SK-N-SH (cell line): ENCODE measurements at regions of chr20 and their contacts with region 1.

Region 1: GRCh38 chr20:36439040-36439730 is 102.1 kb upstream of the MYL9 start:
- DNase-seq: peak; percentile 86
- H3K4me3 ChIP-seq: no peak overlapping the region; a peak in 1 of 4 replicates
- H3K27ac ChIP-seq: no peak overlapping the region
- H3K4me1 ChIP-seq: peaks cover 0 to 4% of the 10 kb centered on the region in 2 experiments; a peak in 1 of 4 replicates
- H3K27me3 ChIP-seq: no peaks in the 10 kb centered on the region
- CTCF ChIP-seq: peak; percentile 92
- EP300 ChIP-seq: no peak
- RAD21 ChIP-seq: peak; percentile 94

Region 2: DNA sequence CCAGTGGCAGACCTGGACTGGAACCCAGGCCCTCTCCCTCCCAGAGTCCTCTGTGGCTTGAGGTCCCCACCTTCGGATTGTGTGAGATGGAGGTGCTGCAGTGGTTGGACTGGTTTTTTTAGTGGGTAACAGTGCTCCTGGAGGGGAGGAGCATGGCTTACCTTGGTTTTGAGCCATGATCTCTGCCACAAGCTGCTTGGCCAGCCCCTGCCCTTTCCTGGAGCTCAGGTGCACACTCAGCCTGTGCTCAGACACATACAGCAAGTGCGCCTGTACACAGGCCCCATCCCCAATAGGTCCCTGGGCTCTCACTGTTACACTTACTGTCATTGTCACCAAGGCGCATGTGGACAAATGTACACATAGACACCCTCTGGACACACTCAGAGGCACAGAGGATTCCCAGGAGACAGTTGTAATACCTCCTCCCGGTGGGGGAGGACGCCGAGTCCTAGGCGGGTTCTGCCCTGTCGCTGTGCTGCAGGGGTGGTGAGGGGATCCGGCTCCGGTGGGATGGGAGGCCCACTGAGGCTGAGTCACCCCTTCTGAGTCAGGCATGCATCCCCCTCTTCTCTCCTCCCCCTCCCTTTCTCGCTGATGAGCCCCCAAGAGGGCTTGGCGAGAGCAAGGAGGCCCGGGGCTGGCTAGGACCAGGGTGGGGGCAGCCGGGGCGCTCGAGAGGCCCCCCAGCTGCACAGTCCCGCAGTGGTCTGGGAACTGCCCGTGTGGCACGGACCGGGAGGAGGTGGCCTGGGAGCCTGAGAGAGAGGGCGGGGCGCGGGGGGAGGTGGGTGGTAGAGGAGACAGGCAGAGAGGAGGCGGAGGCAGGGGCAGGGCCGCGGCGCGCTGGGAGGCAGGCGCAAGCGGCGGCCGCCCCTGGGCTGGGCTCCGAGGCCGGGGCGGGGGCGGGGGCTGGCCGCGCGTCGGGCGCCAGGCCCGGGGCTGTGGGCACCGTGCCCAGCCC is 285.2 kb before region 1 on chr20:
- CTCF ChIA-PET with region 1: interaction called, 27 read pairs
- POLR2A ChIA-PET with region 1: no interaction called
- DNase-seq: peak; percentile 98
- H3K4me3 ChIP-seq: peak overlapping the region; percentile 88 to 89
- H3K27ac ChIP-seq: peak overlapping the region; percentile 8 to 50; a peak in 2 of 4 replicates
- H3K4me1 ChIP-seq: peaks cover 0 to 31% of the 10 kb centered on the region in 2 experiments; a peak in 2 of 4 replicates
- H3K27me3 ChIP-seq: no peaks in the 10 kb centered on the region
- CTCF ChIP-seq: no peak
- EP300 ChIP-seq: no peak
- RAD21 ChIP-seq: no peak

Region 3: GRCh38 chr20:36199345-36200257 is 239.6 kb before region 1 on chr20:
- CTCF ChIA-PET with region 1: interaction called, 219 read pairs
- POLR2A ChIA-PET with region 1: no interaction called
- DNase-seq: peak; percentile 86
- H3K4me3 ChIP-seq: peak overlapping the region in 1 of 2 experiments; percentile 46; a peak in 1 of 4 replicates
- H3K27ac ChIP-seq: peak overlapping the region in 1 of 2 experiments; percentile 94; a peak in 2 of 4 replicates
- H3K4me1 ChIP-seq: peaks cover 0 to 19% of the 10 kb centered on the region in 2 experiments; a peak in 2 of 4 replicates
- H3K27me3 ChIP-seq: no peaks in the 10 kb centered on the region
- CTCF ChIP-seq: peak; percentile 83
- EP300 ChIP-seq: peak in 1 of 2 experiments; percentile 50; a peak in 1 of 4 replicates
- RAD21 ChIP-seq: peak; percentile 90

Region 4: GRCh38 chr20:36228770-36229169 is 210.4 kb before region 1 on chr20:
- CTCF ChIA-PET with region 1: interaction called, 15 read pairs
- POLR2A ChIA-PET with region 1: no interaction called
- DNase-seq: no peak
- H3K4me3 ChIP-seq: no peak overlapping the region
- H3K27ac ChIP-seq: no peak overlapping the region
- H3K4me1 ChIP-seq: no peaks in the 10 kb centered on the region
- H3K27me3 ChIP-seq: no peaks in the 10 kb centered on the region
- CTCF ChIP-seq: no peak
- EP300 ChIP-seq: no peak
- RAD21 ChIP-seq: no peak

Region 5: DNA sequence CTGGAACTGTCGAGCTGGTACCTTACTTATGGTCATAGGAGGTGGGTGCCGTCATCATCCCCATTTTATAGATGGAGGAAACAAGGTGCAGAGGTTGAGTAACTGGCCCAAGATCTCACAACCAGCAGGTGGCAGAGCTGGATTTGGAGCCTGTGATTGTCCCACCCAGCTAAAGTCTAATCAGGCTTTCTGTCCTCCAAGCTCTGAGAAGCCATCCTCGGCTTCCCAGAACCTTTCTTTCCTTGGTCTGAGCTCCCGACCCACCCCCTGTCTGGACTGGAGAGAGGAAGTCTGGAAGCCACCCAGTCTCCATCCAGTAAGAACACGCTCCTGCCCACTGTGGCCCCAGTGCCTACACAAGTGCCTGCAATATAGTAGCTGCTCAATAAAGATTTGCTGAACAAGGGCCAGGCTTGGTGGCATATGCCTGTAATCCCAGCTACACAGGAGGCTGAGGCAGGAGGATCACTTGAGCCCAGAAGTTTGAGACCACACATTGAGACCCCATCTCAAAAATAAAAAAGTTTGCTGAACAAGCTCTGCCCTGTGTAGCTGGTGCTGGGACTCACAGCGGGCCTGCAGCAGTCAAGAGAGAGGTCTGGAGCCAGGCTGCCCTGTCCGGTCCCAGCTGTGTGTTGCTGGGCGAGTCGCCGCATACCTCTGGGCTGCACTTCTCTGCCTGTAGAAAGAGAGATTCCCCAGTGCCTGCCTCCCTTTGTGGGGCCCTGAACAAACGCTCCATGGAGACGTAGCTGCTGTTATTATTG is 165.6 kb before region 1 on chr20:
- CTCF ChIA-PET with region 1: interaction called, 94 read pairs
- POLR2A ChIA-PET with region 1: no interaction called
- DNase-seq: peak; percentile 51
- H3K4me3 ChIP-seq: no peak overlapping the region
- H3K27ac ChIP-seq: no peak overlapping the region
- H3K4me1 ChIP-seq: peaks cover 0 to 15% of the 10 kb centered on the region in 2 experiments; a peak in 1 of 4 replicates
- H3K27me3 ChIP-seq: no peaks in the 10 kb centered on the region; the same call in 1 of the 2 replicates
- CTCF ChIP-seq: peak; percentile 43
- EP300 ChIP-seq: no peak
- RAD21 ChIP-seq: peak; percentile 61

Region 6: DNA sequence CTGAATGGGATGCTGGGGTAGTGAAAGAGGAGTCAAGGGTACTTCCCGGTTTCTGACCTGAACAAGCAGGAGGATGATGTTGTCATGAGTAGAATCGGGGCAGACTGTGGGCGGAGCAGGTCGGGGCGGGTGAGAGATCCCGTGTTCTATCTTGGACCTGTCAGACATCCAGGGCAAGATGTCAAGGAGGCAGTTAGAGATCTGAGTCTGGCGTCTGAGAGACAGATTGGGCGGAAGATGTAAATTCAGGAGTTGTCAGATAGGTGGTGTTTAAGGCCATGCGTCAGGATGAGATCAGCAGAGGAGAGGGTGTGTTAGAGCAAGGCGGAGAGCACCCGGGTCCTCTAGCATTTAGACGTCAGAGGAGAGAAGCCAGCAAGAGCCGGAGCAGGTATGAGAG is 17.5 kb before region 1 on chr20:
- CTCF ChIA-PET with region 1: interaction called, 13 read pairs
- POLR2A ChIA-PET with region 1: no interaction called
- DNase-seq: no peak
- H3K4me3 ChIP-seq: no peak overlapping the region
- H3K27ac ChIP-seq: no peak overlapping the region
- H3K4me1 ChIP-seq: no peaks in the 10 kb centered on the region
- H3K27me3 ChIP-seq: no peaks in the 10 kb centered on the region; the same call in 1 of the 2 replicates
- CTCF ChIP-seq: no peak
- EP300 ChIP-seq: no peak
- RAD21 ChIP-seq: no peak

Region 7: DNA sequence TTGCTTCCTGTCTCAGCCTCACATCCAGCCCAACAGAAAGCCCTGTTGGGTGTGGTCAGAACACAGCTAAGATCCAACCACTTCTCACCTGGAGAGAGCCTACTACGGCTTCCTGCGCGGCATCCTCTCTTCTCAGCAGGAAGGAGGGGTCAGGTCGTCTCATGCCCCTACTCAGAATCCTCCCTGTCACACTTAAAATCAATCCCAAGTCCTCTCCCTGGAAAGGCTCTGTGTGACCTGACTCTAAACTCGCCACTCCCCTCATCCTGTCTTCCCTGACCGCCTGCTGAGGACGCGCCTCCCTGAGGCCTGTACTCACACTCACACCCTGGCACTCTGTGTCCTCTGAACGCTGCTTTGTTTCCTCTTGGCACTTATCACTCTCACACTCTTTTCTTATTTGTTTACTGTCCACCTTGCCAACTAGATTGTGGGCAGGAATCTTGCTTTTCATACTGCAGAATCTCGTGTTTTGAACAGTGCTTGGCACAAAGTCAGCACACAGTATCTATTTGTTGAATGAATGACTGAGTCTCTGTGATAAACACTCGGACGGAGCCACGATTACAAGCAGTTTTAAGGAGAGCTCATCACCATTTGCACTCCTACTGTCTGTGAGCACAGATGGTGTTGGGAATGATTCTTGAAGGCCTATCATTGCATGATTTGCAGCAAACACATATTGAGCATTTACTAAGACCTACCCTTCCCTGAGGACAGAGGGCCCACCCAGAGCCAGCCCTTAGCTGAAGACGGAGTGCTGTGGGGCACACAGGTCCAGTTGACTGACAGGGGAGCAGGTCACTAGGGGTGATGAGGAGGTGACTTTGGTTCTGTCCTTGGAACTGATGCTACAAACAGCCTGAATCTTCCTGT is 185.1 kb after region 1 on chr20:
- CTCF ChIA-PET with region 1: no interaction called
- POLR2A ChIA-PET with region 1: no interaction called
- DNase-seq: no peak
- H3K4me3 ChIP-seq: no peak overlapping the region
- H3K27ac ChIP-seq: no peak overlapping the region
- H3K4me1 ChIP-seq: no peaks in the 10 kb centered on the region
- H3K27me3 ChIP-seq: no peaks in the 10 kb centered on the region
- CTCF ChIP-seq: no peak
- EP300 ChIP-seq: no peak
- RAD21 ChIP-seq: no peak